Naive thymus-derived CD4-positive, alpha-beta T cell (primary cell): ENCODE measurements at regions of chr15 and their contacts with region 1.

Region 1: DNA sequence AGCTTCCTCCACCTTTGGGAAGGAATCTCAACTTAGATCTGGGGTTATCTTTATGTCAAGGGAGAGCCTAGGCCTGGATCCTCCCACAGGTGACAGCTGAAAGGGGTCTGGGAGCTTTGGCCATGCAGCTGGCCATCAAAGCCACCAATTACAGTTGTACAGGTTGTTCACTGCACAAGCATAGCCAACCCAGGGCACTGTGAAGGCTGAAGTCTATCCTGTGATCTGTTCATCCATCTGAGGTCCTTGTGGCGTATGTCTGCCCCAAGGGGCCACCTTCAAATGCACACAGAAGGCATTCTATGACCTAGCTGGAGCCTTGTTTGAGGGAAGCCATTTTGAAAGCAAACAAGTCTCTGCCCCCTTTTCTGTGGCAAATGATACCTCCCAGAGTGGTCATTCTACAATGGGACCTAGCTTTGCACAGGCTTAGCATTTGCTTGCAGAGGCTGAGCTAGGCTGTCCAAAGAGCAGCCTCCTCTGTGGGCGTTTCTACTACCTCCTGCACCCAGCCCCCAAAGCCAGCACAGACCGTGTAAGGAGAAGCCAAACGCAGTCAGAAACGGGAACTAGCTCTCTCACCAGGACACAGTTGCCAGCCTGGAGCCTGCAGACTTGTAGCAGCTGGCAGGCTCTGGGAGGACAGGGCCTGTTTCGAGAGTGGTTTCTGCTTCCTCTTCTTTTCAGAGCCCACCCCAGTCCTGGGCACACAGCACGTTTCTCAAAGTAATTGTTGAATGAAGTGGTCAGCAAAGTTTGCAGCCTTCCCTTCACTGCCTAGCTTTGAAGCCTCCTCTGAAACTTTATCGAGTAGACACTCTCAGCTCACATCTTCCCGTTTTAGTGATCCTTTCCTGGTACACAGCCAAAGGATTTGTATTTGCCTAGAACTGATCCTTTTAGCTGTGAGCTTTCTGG is 157.3 kb upstream of the SMAD3 start:
- DNase-seq: no peak
- ATAC-seq: peak; percentile 56
- H3K4me3 ChIP-seq: no peak overlapping the region
- H3K4me3 Mint-ChIP-seq: no peak overlapping the region
- H3K27ac ChIP-seq: no peak overlapping the region
- H3K27ac Mint-ChIP-seq: no peak overlapping the region
- H3K4me1 ChIP-seq: peaks cover 14 to 19% of the 10 kb centered on the region in 2 donors
- H3K4me1 Mint-ChIP-seq: peaks cover 0 to 36% (median 22%) of the 10 kb centered on the region in 7 donors
- H3K27me3 ChIP-seq: no peaks in the 10 kb centered on the region
- H3K27me3 Mint-ChIP-seq: peaks cover 0 to 9% (median 0%) of the 10 kb centered on the region in 5 donors

Region 2: DNA sequence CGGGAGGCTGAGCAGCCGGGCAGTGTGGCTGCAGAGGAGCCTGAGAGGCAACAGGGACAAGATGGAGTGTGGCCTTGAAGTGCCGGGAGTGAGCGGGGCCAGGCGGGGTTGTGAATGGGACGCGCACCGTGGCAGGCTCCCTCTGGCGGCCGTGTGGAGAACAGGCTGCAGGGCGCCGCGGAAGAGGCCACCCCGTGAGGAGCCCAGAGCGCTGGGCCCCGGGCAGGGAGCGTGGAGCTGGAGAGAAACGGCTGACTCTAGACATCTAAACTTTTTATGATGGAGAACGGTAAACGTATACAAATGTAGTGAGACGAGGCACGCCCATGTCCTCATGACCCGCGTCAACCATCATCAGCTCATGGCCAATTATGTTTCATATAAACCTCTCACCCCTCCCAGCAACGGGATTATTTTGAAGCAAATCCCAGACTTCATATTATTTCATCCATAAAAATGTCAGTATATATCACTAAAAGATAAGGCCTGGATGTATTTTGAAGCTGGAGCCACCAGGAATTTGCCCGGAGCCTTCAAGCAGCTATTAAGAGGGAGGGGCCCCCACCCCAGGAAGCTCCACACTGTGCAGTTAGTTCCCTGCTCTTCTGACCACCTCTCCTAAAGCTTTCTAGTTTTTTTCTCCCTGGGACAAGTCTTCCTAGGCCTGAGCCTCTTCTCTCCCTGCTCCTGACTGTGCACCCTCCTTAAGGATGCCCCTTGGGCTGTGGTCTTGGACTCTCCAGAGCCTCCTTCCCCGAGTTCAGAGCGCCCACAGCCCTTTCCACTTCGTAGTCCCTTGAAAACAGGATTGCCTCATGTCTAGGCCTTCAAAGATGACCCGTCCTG is 56.6 kb before region 1 on chr15:
- CTCF ChIA-PET with region 1: no interaction called
- POLR2A ChIA-PET with region 1: no interaction called
- intact Hi-C with region 1: no loop called
- DNase-seq: peak; percentile 33 to 78 (median 67)
- ATAC-seq: peak; percentile 96
- H3K4me3 ChIP-seq: no peak overlapping the region
- H3K4me3 Mint-ChIP-seq: peak overlapping the region in 9 of 10 donors; percentile 26 to 79 (median 59)
- H3K27ac ChIP-seq: no peak overlapping the region
- H3K27ac Mint-ChIP-seq: peak overlapping the region in 1 of 9 donors; percentile 21
- H3K4me1 ChIP-seq: no peaks in the 10 kb centered on the region
- H3K4me1 Mint-ChIP-seq: peaks cover 5 to 12% (median 8%) of the 10 kb centered on the region in 7 donors
- H3K27me3 ChIP-seq: no peaks in the 10 kb centered on the region
- H3K27me3 Mint-ChIP-seq: peaks cover 11 to 23% (median 17%) of the 10 kb centered on the region in 5 donors

Region 3: DNA sequence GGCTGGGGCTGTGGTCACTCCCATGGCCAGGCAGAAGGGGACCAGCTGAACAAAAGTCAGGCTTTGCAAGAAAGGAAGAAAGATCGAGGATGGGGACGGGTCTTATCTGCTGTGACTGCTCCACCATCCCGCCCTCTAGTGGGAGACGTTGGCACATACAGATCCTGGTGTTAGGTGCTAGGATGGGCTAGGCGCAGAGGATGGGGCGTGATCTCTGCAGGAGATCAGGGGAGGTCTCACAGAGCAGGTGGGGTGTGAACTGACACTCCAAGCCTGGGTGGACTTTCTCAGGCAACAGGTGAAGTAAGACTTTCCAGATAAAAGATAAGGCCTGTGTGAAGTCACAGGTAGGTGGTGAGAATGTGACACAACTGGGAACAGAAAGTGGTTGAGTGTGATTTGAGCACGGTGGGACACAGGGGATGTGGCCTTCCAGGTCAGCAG is 15.4 kb after region 1 on chr15:
- CTCF ChIA-PET with region 1: interaction called, 20 read pairs
- POLR2A ChIA-PET with region 1: interaction called, 4 read pairs
- intact Hi-C with region 1: loop called in 1 of 2 experiments (anchors 1 kb)
- DNase-seq: peak in 5 of 9 donors; percentile 11 to 31 (median 18)
- ATAC-seq: peak; percentile 38
- H3K4me3 ChIP-seq: no peak overlapping the region
- H3K4me3 Mint-ChIP-seq: peak overlapping the region in 3 of 10 donors; percentile 2 to 18 (median 12)
- H3K27ac ChIP-seq: no peak overlapping the region
- H3K27ac Mint-ChIP-seq: no peak overlapping the region
- H3K4me1 ChIP-seq: no peaks in the 10 kb centered on the region
- H3K4me1 Mint-ChIP-seq: peaks cover 0 to 16% (median 5%) of the 10 kb centered on the region in 7 donors
- H3K27me3 ChIP-seq: no peaks in the 10 kb centered on the region
- H3K27me3 Mint-ChIP-seq: peaks cover 10 to 26% (median 19%) of the 10 kb centered on the region in 5 donors

Region 4: GRCh38 chr15:67542420-67543347 is 634.6 kb after region 1 on chr15 and contains the start of gene MAP2K5:
- CTCF ChIA-PET with region 1: no interaction called
- POLR2A ChIA-PET with region 1: no interaction called
- intact Hi-C with region 1: loop called in 1 of 2 experiments (anchors 10 kb)
- DNase-seq: peak; percentile 75 to 87 (median 78)
- ATAC-seq: peak; percentile 89
- H3K4me3 ChIP-seq: peak within 1 kb of the TSS; percentile 90
- H3K4me3 Mint-ChIP-seq: peak within 1 kb of the TSS; percentile 92 to 98 (median 98)
- H3K27ac ChIP-seq: peak within 1 kb of the TSS; percentile 78
- H3K27ac Mint-ChIP-seq: peak within 1 kb of the TSS; percentile 97 to 100 (median 99)
- H3K4me1 ChIP-seq: peaks cover 7 to 22% of the 10 kb centered on the region in 2 donors
- H3K4me1 Mint-ChIP-seq: peaks cover 20 to 68% (median 56%) of the 10 kb centered on the region in 7 donors
- H3K27me3 ChIP-seq: no peaks in the 10 kb centered on the region
- H3K27me3 Mint-ChIP-seq: no peaks in the 10 kb centered on the region
- total RNA-seq, gene MAP2K5: 23.4 to 43.4 (median 35.7) TPM